H1 (cell line): ENCODE measurements at regions of chr3 and their contacts with region 1.

Region 1: DNA sequence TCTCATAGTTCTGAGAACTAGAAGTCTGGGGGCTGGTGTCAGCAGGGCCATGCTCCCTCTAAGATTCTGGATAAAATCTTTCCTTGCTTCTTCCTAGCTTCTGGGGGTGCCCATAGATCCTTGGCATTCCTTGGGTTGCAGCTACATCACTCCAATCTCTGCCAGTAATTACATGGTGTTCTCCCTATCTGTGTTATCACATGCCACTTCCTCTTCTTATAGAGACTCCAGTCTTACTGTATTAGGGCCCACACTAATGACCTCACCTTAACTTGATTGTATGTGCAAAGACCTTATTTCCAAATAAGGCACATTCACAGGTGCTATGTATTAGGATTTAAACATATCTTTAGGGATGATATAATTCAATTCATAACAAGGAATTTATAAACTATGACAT is 618.5 kb downstream of the FGF12 start:
- DNase-seq: no peak
- H3K4me3 ChIP-seq: no peak overlapping the region
- H3K27ac ChIP-seq: no peak overlapping the region
- H3K4me1 ChIP-seq: peaks cover 0 to under 1% (median 0%) of the 10 kb centered on the region in 4 experiments; a peak in 1 of 7 replicates
- H3K27me3 ChIP-seq: no peaks in the 10 kb centered on the region
- CTCF ChIP-seq: no peak
- EP300 ChIP-seq: no peak
- POLR2A ChIP-seq: no peak
- RAD21 ChIP-seq: no peak

Region 2: DNA sequence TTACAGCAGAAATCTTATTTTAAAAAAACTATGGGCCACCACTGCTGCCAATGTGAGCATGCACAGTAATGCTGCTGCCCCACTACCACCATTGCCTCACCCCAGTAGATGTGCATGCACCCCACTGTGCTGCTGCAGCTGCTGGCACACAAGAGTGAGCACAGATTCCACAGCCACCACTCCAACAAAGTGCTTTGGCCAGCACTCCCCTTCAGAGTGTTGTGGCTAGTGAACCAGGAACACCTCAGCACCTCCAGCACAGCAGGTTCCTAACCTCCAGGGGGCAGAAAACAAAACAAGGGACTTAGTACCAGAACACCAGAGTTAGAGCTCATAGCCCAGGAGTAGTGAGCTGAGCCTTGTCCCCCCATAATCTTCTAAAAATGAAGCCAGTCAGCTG is 18.2 kb before region 1 on chr3:
- CTCF ChIA-PET with region 1: no interaction called
- POLR2A ChIA-PET with region 1: no interaction called
- DNase-seq: peak in 1 of 2 experiments; percentile 45
- H3K4me3 ChIP-seq: no peak overlapping the region
- H3K27ac ChIP-seq: no peak overlapping the region
- H3K4me1 ChIP-seq: peaks cover 0 to 4% (median 1%) of the 10 kb centered on the region in 4 experiments; a peak in 2 of 7 replicates
- H3K27me3 ChIP-seq: no peaks in the 10 kb centered on the region
- CTCF ChIP-seq: peak in 2 of 3 experiments; percentile 13 to 27; a peak in 2 of 4 replicates
- EP300 ChIP-seq: no peak
- POLR2A ChIP-seq: no peak
- RAD21 ChIP-seq: peak in 1 of 2 experiments; percentile 6; a peak in 2 of 4 replicates

Region 3: GRCh38 chr3:192130534-192131132 is 21.8 kb after region 1 on chr3:
- CTCF ChIA-PET with region 1: interaction called, 12 read pairs
- POLR2A ChIA-PET with region 1: no interaction called
- DNase-seq: peak; percentile 5 to 47
- H3K4me3 ChIP-seq: no peak overlapping the region
- H3K27ac ChIP-seq: no peak overlapping the region
- H3K4me1 ChIP-seq: no peaks in the 10 kb centered on the region
- H3K27me3 ChIP-seq: no peaks in the 10 kb centered on the region
- CTCF ChIP-seq: peak; percentile 6 to 88 (median 63)
- EP300 ChIP-seq: no peak
- POLR2A ChIP-seq: no peak
- RAD21 ChIP-seq: peak; percentile 71 to 76